GM12878 (cell line): ENCODE measurements at regions of chr12 and their contacts with region 1.

Region 1: DNA sequence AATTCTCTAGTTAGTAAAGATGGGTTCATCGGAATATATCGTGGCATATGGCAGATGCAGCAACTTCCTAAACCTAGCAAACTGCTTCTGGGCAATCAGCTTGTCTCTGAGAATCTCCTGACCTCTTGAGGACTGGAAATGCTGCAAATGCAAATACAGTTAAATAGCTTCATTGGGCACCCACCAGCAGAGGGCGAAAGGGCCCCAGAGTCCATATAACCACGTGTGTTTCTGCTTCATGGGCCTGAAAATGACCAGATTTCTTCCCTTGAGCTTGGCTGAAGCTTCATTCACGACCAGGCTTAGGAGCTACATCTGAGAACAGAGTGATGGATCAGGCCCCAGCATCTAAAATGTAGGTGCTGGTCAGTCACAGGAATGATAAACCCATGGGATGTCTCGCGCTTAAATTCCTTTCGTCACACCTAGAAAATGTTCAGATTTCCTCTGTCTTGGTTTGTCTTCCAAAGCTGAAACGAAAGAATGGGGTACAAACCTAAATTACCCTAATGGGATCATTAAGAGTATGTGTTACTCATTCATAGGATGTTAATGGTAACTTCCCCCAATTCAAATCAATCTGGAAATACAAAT is 1482.5 kb upstream of the TMEM132C start:
- DNase-seq: no peak
- ATAC-seq: peak; percentile 58
- H3K4me3 ChIP-seq: no peak overlapping the region
- H3K27ac ChIP-seq: no peak overlapping the region
- H3K4me1 ChIP-seq: no peaks in the 10 kb centered on the region
- H3K27me3 ChIP-seq: no peaks in the 10 kb centered on the region
- CTCF ChIP-seq: peak; percentile 2 to 26 (median 22); a peak in 3 of 6 replicates
- EP300 ChIP-seq: no peak
- POLR2A ChIP-seq: no peak
- RAD21 ChIP-seq: peak; percentile 44

Region 2: GRCh38 chr12:126747530-126748149 is 36.8 kb before region 1 on chr12:
- CTCF ChIA-PET with region 1: interaction called, 11 read pairs
- POLR2A ChIA-PET with region 1: no interaction called
- RAD21 ChIA-PET with region 1: no interaction called
- SMC1A ChIA-PET with region 1: no interaction called
- in situ Hi-C with region 1: no loop called
- intact Hi-C with region 1: no loop called
- DNase-seq: no peak
- ATAC-seq: peak; percentile 73
- H3K4me3 ChIP-seq: no peak overlapping the region
- H3K27ac ChIP-seq: no peak overlapping the region
- H3K4me1 ChIP-seq: no peaks in the 10 kb centered on the region
- H3K27me3 ChIP-seq: no peaks in the 10 kb centered on the region
- CTCF ChIP-seq: peak; percentile 55 to 76 (median 65)
- EP300 ChIP-seq: no peak
- POLR2A ChIP-seq: no peak
- RAD21 ChIP-seq: peak; percentile 40

Region 3: DNA sequence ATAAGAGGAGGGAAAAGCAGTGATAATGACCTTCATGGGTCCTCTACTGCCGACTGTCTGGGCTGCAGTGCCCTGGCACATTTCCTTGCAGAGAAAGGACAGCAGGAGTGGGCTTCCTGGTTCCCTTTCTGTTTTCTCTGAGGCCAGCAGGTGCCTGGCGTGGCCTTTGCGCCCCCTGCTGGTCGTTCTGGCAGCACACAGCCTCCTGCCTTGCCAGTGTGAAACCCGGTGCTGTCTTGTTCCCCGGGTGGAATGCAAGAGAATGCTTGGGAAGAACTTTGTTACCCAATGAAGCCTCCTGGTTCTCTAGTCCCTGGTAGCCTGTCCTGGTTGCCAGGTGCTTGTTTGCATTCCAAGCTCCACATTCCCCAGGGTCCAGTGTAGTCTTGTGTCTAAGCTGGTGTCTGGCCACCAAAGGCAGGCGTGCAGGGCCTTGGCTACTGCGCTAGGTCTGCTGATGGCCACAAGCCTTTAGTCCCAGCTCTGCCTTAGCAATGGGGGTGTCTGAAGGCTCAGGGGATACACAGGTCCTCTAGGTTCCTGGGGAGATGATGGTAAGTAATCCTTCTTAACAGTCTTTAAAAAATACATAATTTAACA is 90.1 kb after region 1 on chr12:
- CTCF ChIA-PET with region 1: interaction called, 35 read pairs
- POLR2A ChIA-PET with region 1: no interaction called
- RAD21 ChIA-PET with region 1: interaction called, 4 read pairs
- SMC1A ChIA-PET with region 1: interaction called, 8 read pairs
- in situ Hi-C with region 1: no loop called
- intact Hi-C with region 1: no loop called
- DNase-seq: peak; percentile 1
- ATAC-seq: peak; percentile 99
- H3K4me3 ChIP-seq: no peak overlapping the region
- H3K27ac ChIP-seq: no peak overlapping the region
- H3K4me1 ChIP-seq: no peaks in the 10 kb centered on the region
- H3K27me3 ChIP-seq: no peaks in the 10 kb centered on the region
- CTCF ChIP-seq: peak; percentile 87 to 90 (median 88)
- EP300 ChIP-seq: no peak
- POLR2A ChIP-seq: no peak
- RAD21 ChIP-seq: peak; percentile 85

Region 4: GRCh38 chr12:127293507-127294310 is 509.3 kb after region 1 on chr12:
- CTCF ChIA-PET with region 1: interaction called, 10 read pairs
- POLR2A ChIA-PET with region 1: no interaction called
- RAD21 ChIA-PET with region 1: no interaction called
- SMC1A ChIA-PET with region 1: no interaction called
- in situ Hi-C with region 1: no loop called
- intact Hi-C with region 1: no loop called
- DNase-seq: no peak
- ATAC-seq: peak; percentile 76
- H3K4me3 ChIP-seq: no peak overlapping the region
- H3K27ac ChIP-seq: no peak overlapping the region
- H3K4me1 ChIP-seq: no peaks in the 10 kb centered on the region
- H3K27me3 ChIP-seq: no peaks in the 10 kb centered on the region
- CTCF ChIP-seq: peak; percentile 45 to 49 (median 46); a peak in 5 of 6 replicates
- EP300 ChIP-seq: no peak
- POLR2A ChIP-seq: no peak
- RAD21 ChIP-seq: peak; percentile 65